Activated CD4-positive, alpha-beta T cell treated with anti-CD3 and anti-CD28 coated beads for 36 hours (primary cell): ENCODE measurements at regions of chr9 and their contacts with region 1.

Region 1: DNA sequence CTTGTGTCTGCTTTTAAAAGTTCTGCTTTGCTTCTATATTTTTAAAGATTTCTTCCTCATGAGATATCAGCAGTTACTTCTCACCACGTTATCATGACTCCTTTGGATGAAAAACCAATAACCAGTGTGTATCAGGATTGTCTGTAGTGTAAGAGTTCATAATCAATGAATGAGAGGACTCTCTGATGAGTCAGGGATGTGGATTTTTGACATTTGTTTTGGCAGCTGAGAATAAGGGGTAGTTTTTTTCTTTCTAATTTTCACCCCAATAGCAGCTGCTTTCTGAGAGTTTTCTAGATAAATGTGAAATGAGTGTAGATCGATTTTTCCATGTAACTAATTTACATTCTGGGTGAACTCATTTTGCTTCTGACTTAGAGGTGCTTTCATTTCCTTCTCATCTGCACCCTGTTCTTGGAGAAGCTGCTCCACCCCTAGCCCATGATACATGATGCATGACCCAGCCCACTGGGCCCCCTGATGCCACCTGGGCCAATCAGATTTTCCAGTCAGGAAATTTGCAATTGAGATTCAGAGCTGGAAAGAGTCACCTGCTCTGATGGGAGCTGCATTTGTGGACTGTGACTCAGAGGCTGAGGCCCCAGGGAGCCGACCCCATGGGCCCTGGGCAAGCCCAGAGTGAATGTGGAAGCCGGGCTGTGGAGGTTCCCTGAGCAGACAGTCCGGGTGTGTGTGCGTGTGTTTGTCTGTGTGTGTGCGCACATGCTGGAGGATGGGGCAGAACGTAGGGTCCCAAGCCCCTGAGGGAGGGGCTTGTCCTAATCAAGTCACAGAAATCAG is 159.3 kb downstream of the RGS3 start:
- DNase-seq: peak; percentile 90
- ATAC-seq: peak; percentile 92
- H3K4me3 Mint-ChIP-seq: peak overlapping the region; percentile 58
- H3K27ac Mint-ChIP-seq: peak overlapping the region; percentile 98
- H3K4me1 Mint-ChIP-seq: peaks cover 57% of the 10 kb centered on the region
- H3K27me3 Mint-ChIP-seq: no peaks in the 10 kb centered on the region

Region 2: GRCh38 chr9:113511856-113512761 is 110.7 kb before region 1 on chr9:
- CTCF ChIA-PET with region 1: no interaction called
- POLR2A ChIA-PET with region 1: interaction called, 3 read pairs
- intact Hi-C with region 1: loop called in 1 of 2 experiments (anchors 2 kb)
- DNase-seq: peak; percentile 84
- ATAC-seq: peak; percentile 72
- H3K4me3 Mint-ChIP-seq: peak overlapping the region; percentile 57
- H3K27ac Mint-ChIP-seq: peak overlapping the region; percentile 93
- H3K4me1 Mint-ChIP-seq: peaks cover 58% of the 10 kb centered on the region
- H3K27me3 Mint-ChIP-seq: no peaks in the 10 kb centered on the region

Region 3: DNA sequence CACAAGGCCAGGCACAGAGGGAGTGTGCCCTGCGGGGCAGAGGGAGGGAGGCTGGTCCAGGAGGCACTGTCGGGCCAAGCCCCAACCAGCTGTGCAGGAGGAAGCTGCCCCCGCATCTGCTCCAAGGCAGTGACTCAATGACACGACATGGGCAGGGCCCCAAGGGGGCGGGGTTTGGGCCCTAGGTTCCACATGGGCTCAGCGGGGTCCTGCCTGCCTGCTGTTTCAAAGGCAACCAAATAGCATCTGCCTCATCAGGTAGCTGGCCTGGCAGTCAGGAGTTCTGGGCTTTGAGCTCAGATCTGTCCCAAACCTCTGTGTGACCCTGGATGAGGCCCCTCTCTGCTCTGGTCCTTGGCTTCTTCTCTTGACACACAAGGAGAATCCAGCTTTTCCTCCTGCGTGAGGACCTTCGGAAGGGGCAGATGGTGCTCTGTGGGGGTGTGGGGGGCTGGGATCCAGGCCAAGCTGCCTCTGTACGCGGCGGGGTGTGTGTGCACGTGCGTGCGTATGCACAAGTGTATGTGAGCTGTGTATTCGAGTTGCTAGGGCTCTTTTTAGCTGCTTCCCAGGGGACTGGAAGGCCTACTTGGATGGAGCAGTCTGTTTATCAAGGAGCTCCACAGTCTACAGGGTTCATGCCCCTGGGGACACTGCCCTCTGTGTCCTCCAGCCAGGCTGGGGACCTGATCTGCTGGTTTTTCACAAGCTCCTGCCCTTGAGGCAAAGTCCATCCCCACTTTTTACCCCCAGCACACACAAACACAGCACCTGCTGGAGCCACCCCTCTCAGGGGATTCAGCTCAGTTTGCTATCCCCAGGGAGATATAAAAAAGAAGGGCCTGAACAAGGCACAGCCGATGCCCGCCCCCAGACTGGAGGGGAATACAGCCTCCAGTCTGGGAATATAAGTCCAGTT is 20.4 kb before region 1 on chr9:
- CTCF ChIA-PET with region 1: interaction called, 3 read pairs
- POLR2A ChIA-PET with region 1: interaction called, 3 read pairs
- intact Hi-C with region 1: loop called in 1 of 2 experiments (anchors 1 kb)
- DNase-seq: peak; percentile 92
- ATAC-seq: peak; percentile 100
- H3K4me3 Mint-ChIP-seq: no peak overlapping the region
- H3K27ac Mint-ChIP-seq: peak overlapping the region; percentile 78
- H3K4me1 Mint-ChIP-seq: peaks cover 15% of the 10 kb centered on the region
- H3K27me3 Mint-ChIP-seq: no peaks in the 10 kb centered on the region

Region 4: GRCh38 chr9:113853324-113853723 is 230.5 kb after region 1 on chr9:
- CTCF ChIA-PET with region 1: no interaction called
- POLR2A ChIA-PET with region 1: no interaction called
- intact Hi-C with region 1: loop called in 1 of 2 experiments (anchors 5 kb)
- DNase-seq: no peak
- ATAC-seq: no peak
- H3K4me3 Mint-ChIP-seq: no peak overlapping the region
- H3K27ac Mint-ChIP-seq: no peak overlapping the region
- H3K4me1 Mint-ChIP-seq: peaks cover 7% of the 10 kb centered on the region
- H3K27me3 Mint-ChIP-seq: peaks cover 9% of the 10 kb centered on the region